Endothelial cell of umbilical vein (primary cell): ENCODE measurements at regions of chr20 and their contacts with region 1.

Region 1: GRCh38 chr20:34704177-34705007 is at the start of gene TP53INP2:
- DNase-seq: peak; percentile 81
- H3K4me3 ChIP-seq: peak within 1 kb of the TSS; percentile 50 to 79 (median 75)
- H3K27ac ChIP-seq: peak within 1 kb of the TSS; percentile 88
- H3K4me1 ChIP-seq: peaks cover 14% of the 10 kb centered on the region
- H3K27me3 ChIP-seq: no peaks in the 10 kb centered on the region
- CTCF ChIP-seq: no peak
- POLR2A ChIP-seq: peak; percentile 81
- total RNA-seq, gene TP53INP2: 30.5 and 36.4 TPM in 2 replicates

Region 2: GRCh38 chr20:34538671-34539123 is 165.7 kb before region 1 on chr20:
- CTCF ChIA-PET with region 1: interaction called, 24 read pairs
- POLR2A ChIA-PET with region 1: no interaction called
- dilution Hi-C with region 1: no loop called
- intact Hi-C with region 1: loop called (anchors 1 kb)
- DNase-seq: peak; percentile 45
- H3K4me3 ChIP-seq: no peak overlapping the region
- H3K27ac ChIP-seq: no peak overlapping the region
- H3K4me1 ChIP-seq: no peaks in the 10 kb centered on the region
- H3K27me3 ChIP-seq: no peaks in the 10 kb centered on the region
- CTCF ChIP-seq: peak; percentile 75 to 87
- POLR2A ChIP-seq: no peak

Region 3: DNA sequence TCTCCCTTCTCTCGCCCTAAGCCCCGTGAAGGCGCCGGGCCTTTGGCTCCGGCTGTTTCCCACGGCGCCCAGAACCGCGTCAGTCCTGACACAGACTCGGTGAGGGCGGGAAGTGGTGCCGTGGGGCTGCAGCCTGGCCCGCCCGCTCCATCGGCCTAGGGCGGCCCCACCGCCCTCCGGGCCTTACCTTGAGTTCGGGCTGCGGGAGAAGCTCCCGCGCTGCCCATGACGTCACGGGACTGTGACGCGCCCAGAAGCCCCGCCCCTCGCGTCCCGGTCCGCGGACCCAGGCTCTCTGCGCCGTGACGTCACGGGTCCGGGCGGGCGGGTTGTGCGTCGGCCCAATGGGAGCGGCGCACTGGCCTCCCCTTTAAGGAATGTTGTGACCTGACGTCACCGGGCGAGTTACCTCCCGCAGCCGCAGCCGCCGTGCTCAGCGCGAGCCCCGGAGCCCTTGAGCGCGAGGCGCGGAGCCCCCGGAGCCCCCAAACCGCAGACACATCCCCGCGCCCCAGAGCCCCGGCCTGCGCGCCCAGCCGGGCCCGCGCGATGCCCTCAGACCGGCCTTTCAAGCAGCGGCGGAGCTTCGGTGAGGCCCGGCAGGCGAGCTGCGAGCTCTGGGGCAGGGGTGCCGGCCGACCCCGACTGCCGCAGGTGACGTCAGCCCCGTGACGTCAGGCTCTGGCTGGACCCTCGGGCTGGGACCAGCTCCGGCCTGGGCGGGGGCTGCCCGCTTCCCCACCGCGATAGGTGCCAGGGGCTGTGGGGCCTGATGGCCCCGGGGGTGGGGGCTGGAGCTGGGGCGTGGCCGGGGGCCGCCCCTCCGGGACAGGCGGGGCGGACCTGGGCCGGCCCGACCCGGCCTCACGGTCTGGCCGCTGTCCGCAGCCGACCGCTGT is 145.8 kb before region 1 on chr20 and contains the start of gene MAP1LC3A:
- CTCF ChIA-PET with region 1: interaction called, 16 read pairs
- POLR2A ChIA-PET with region 1: interaction called, 4 read pairs
- dilution Hi-C with region 1: no loop called
- intact Hi-C with region 1: loop called (anchors 2 kb)
- DNase-seq: peak; percentile 93
- H3K4me3 ChIP-seq: peak within 1 kb of the TSS; percentile 60 to 92 (median 73)
- H3K27ac ChIP-seq: peak within 1 kb of the TSS; percentile 77
- H3K4me1 ChIP-seq: no peaks in the 10 kb centered on the region
- H3K27me3 ChIP-seq: no peaks in the 10 kb centered on the region
- CTCF ChIP-seq: no peak
- POLR2A ChIP-seq: no peak
- total RNA-seq, gene MAP1LC3A: 32.1 and 32.7 TPM in 2 replicates

Region 4: DNA sequence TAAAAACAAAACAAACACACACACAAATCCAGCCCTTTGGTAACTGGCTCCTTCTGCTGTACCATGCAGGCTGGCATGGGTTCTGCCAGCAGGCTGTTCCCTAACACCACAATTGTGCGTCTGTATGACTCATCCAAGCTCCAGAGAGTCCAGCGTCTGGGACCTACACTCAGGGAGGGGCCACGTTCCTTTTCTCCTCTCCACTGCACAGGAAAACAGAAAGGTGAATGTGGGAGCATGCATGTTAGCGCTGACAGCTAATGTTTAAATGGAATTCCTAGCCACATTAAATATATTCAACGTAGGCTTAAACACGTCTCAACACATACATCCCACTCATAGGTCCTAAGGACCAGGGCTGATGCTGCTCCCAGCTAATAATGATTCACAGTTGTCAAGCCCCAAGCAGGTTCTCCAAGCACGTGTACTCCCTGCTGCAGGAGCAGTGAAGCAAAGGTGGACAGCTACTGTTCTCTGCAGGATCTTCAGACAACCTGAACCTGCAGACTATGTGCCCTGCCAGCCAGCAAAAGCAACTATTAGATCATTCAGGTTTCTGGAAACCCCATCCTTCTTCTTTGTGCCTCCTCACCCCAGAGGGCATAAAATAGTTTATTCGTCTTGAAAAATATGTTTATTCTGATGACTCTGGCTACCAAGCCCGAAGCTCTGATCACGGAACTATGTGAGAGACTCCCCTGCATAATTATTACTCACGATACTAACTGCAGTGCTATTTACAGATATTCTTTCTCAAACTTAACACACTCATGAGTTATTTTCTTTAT is 125.0 kb before region 1 on chr20:
- CTCF ChIA-PET with region 1: interaction called, 31 read pairs
- POLR2A ChIA-PET with region 1: interaction called, 7 read pairs
- dilution Hi-C with region 1: no loop called
- intact Hi-C with region 1: loop called (anchors 1 kb)
- DNase-seq: peak; percentile 83
- H3K4me3 ChIP-seq: no peak overlapping the region
- H3K27ac ChIP-seq: no peak overlapping the region
- H3K4me1 ChIP-seq: peaks cover 14% of the 10 kb centered on the region
- H3K27me3 ChIP-seq: no peaks in the 10 kb centered on the region
- CTCF ChIP-seq: peak; percentile 74 to 77
- POLR2A ChIP-seq: no peak

Region 5: DNA sequence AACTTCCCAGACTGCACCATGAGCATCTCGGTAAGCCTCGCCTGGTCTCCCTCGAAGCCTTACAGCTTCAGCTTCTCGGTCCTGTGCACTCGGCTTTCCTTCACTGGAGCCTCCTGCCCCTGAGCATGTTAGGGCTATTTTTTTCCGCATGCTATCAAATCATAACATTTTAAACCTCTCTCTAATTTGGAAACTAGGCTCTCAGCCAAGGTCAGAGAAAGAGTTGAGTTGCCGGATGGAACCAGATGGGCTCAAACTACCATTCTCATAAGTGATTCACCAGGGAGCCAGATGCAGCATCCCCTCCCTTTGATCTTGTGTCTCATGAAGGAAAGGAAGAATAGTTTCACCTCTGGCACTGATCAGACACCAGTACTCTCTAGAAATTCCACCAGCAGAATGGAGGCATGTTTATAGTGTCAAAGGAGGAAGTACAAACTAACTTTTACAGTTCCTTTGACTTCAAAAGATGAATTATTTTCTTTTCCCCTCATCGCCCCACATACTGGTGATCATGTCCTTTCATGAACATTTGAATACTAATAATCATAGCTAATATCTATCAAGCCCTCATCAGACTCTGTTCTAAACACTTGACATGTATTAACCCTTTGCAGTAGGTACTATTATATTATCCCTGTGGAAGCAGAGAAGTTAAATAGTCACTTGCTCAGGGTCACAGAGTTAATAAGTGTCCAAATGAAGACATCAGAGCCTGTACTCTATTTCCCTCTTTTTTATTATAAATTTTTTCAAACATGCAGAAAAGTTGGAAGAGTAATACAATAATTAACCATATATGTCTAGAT is 99.2 kb before region 1 on chr20:
- CTCF ChIA-PET with region 1: no interaction called
- POLR2A ChIA-PET with region 1: no interaction called
- dilution Hi-C with region 1: no loop called
- intact Hi-C with region 1: no loop called
- DNase-seq: peak; percentile 54
- H3K4me3 ChIP-seq: no peak overlapping the region
- H3K27ac ChIP-seq: no peak overlapping the region
- H3K4me1 ChIP-seq: peaks cover 9% of the 10 kb centered on the region
- H3K27me3 ChIP-seq: no peaks in the 10 kb centered on the region
- CTCF ChIP-seq: no peak
- POLR2A ChIP-seq: no peak

Region 6: GRCh38 chr20:34676642-34677373 is 27.6 kb before region 1 on chr20 and contains the start of gene PIGU:
- CTCF ChIA-PET with region 1: interaction called, 7 read pairs
- POLR2A ChIA-PET with region 1: interaction called, 3 read pairs
- dilution Hi-C with region 1: no loop called
- intact Hi-C with region 1: loop called (anchors 1 kb)
- DNase-seq: peak; percentile 97
- H3K4me3 ChIP-seq: peak within 1 kb of the TSS; percentile 74 to 86 (median 79)
- H3K27ac ChIP-seq: peak within 1 kb of the TSS; percentile 25
- H3K4me1 ChIP-seq: peaks cover 4% of the 10 kb centered on the region
- H3K27me3 ChIP-seq: no peaks in the 10 kb centered on the region
- CTCF ChIP-seq: peak in 1 of 2 donors; percentile 18
- POLR2A ChIP-seq: peak; percentile 47
- total RNA-seq, gene PIGU: 20.3 and 23.3 TPM in 2 replicates

Region 7: GRCh38 chr20:34720266-34720665 is 15.9 kb after region 1 on chr20:
- CTCF ChIA-PET with region 1: interaction called, 10 read pairs
- POLR2A ChIA-PET with region 1: no interaction called
- dilution Hi-C with region 1: no loop called
- intact Hi-C with region 1: no loop called
- DNase-seq: no peak
- H3K4me3 ChIP-seq: no peak overlapping the region
- H3K27ac ChIP-seq: no peak overlapping the region
- H3K4me1 ChIP-seq: no peaks in the 10 kb centered on the region
- H3K27me3 ChIP-seq: no peaks in the 10 kb centered on the region
- CTCF ChIP-seq: no peak
- POLR2A ChIP-seq: no peak